ENCODE measurements at regions of chr6 and their contacts with region 1.

Region 1: DNA sequence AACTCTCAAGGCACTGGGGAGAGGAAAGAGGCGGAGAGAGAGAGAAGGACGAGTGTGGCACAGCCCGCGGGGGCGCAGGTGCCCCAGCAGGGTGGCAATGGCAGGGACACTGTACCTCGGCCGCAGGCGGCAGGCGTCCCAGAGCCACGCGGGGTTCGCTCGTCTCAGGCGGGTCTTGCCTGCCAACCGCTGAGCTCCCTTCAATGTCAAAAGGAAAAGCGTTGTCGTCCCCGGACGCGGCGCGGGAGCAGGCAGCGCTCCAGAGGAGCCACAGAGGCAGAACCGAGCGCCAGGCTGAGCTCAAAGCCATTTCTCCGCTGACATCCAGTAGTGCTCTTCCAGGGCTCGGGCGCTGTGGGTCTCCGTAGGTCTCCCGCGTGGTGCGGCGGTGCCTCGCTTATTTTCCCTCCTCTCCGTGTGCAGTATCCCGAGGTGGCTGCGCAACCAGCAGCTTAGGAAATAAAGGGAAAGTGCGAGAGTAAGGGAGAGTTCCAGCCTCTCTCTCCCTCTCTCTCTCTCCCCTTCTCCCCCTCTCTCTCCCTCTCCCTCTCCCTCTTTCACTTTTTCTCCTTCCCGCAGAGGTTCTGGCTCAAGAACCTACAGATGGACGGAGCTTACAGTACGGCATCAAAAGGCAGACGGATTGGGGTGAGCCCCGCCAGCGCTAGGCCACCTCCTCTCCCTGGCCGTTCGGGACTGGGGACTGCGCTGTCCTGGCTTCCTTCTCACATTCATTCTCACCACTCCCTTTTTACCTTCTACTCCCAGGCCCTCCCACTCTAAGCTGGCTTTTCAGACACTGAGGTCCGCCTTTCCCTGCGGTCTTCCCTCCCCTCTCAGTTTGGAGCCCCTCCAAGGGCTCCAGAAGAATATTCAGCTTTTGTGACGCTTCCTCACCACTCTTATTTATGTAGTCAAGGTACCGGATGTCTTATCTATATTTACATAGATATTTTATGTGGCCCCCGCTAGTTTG is at the start of gene LAMA4:
- DNase-seq: peak; percentile 29
- H3K4me3 ChIP-seq: peak within 1 kb of the TSS; percentile 42 to 66 (median 56)
- H3K27ac ChIP-seq: peak within 1 kb of the TSS; percentile 87 to 89 (median 89)
- H3K4me1 ChIP-seq: peaks cover 3 to 13% (median 9%) of the 10 kb centered on the region in 4 donors
- H3K27me3 ChIP-seq: peaks cover 26% of the 10 kb centered on the region
- CTCF ChIP-seq: no peak
- EP300 ChIP-seq: no peak
- POLR2A ChIP-seq: peak; percentile 54
- total RNA-seq, gene LAMA4: 27.3 to 54.9 (median 40.1) TPM

Region 2: GRCh38 chr6:110366256-110366655 is 1887.9 kb before region 1 on chr6:
- in situ Hi-C with region 1: no loop called
- intact Hi-C with region 1: loop called (anchors 5 kb)
- DNase-seq: no peak
- H3K4me3 ChIP-seq: no peak overlapping the region
- H3K27ac ChIP-seq: no peak overlapping the region
- H3K4me1 ChIP-seq: peaks cover 0 to 5% (median 0%) of the 10 kb centered on the region in 4 donors
- H3K27me3 ChIP-seq: no peaks in the 10 kb centered on the region
- CTCF ChIP-seq: no peak
- EP300 ChIP-seq: no peak
- POLR2A ChIP-seq: no peak

Region 3: DNA sequence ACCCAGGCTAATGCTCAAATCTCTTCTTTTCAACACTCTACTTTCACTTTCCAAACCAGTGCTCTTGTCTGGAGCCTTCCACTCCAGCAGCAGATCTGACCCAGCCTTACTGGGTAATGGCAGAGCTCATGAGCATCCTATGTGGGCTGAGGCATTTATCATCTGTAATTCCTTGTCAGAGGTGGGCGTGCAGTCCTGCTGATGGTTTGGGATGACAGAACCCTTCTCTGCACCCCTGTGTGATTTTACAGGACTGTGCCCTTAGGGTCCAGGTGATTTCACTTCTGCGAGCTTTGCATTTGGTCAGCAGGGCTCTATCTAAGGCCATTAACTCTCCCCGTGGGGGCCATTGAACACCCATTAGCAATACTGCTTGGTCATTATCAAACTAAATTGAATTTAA is 55.1 kb before region 1 on chr6:
- in situ Hi-C with region 1: no loop called
- intact Hi-C with region 1: loop called (anchors 10 kb)
- DNase-seq: no peak
- H3K4me3 ChIP-seq: no peak overlapping the region
- H3K27ac ChIP-seq: no peak overlapping the region
- H3K4me1 ChIP-seq: peaks cover 0 to 14% (median 2%) of the 10 kb centered on the region in 4 donors
- H3K27me3 ChIP-seq: no peaks in the 10 kb centered on the region
- CTCF ChIP-seq: no peak
- EP300 ChIP-seq: no peak
- POLR2A ChIP-seq: no peak

Region 4: GRCh38 chr6:112223070-112223861 is 30.9 kb before region 1 on chr6:
- in situ Hi-C with region 1: no loop called
- intact Hi-C with region 1: loop called (anchors 2 kb)
- DNase-seq: no peak
- H3K4me3 ChIP-seq: no peak overlapping the region
- H3K27ac ChIP-seq: peak overlapping the region; percentile 80 to 88 (median 85)
- H3K4me1 ChIP-seq: peaks cover 0 to 53% (median 13%) of the 10 kb centered on the region in 4 donors
- H3K27me3 ChIP-seq: no peaks in the 10 kb centered on the region
- CTCF ChIP-seq: no peak
- EP300 ChIP-seq: no peak
- POLR2A ChIP-seq: no peak

Region 5: DNA sequence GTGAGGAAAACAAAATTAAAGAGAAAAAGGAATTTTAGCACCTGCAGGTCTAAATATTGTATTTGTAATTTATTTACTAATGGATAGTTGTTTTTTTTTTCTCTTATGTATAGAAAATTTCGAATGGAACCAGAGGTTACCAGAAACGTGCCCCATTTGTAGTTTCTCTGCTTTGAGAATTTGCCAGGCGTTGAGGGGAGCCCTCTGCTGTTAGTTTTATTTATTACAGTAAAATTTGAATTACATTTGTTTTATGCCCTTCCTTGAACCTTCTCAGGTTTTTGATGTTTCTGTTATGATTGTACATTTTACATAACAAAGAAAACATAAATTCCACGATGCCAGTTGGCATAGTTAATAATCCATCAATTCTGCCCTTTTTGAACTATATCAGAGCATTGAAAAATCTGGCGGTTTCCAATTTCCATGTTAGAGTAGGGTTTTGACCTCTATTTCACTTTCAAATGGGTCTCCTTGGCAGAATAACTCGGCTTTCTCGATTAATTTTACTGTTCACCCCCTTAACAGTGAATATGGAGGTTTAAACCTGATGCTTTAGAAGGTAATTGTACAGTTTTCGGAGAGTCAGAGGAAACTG is 57.9 kb after region 1 on chr6:
- in situ Hi-C with region 1: no loop called
- intact Hi-C with region 1: loop called (anchors 10 kb)
- DNase-seq: no peak
- H3K4me3 ChIP-seq: no peak overlapping the region
- H3K27ac ChIP-seq: no peak overlapping the region
- H3K4me1 ChIP-seq: peaks cover 0 to 17% (median 0%) of the 10 kb centered on the region in 4 donors
- H3K27me3 ChIP-seq: no peaks in the 10 kb centered on the region
- CTCF ChIP-seq: peak; percentile 50 to 68 (median 62)
- EP300 ChIP-seq: no peak
- POLR2A ChIP-seq: no peak

Region 6: GRCh38 chr6:112427499-112427898 is 173.4 kb after region 1 on chr6:
- in situ Hi-C with region 1: no loop called
- intact Hi-C with region 1: no loop called
- DNase-seq: no peak
- H3K4me3 ChIP-seq: no peak overlapping the region
- H3K27ac ChIP-seq: no peak overlapping the region
- H3K4me1 ChIP-seq: no peaks in the 10 kb centered on the region
- H3K27me3 ChIP-seq: no peaks in the 10 kb centered on the region
- CTCF ChIP-seq: no peak
- EP300 ChIP-seq: no peak
- POLR2A ChIP-seq: no peak

Measured in transverse colon (tissue), 4 donors.